Colonic mucosa (tissue), 4 donors: ENCODE measurements at regions of chr6 and their contacts with region 1.

Region 1: GRCh38 chr6:111210194-111210728 is 123.0 kb downstream of the SLC16A10 start:
- DNase-seq: no peak
- H3K4me3 ChIP-seq: no peak overlapping the region
- H3K27ac ChIP-seq: no peak overlapping the region
- H3K4me1 ChIP-seq: no peaks in the 10 kb centered on the region
- H3K27me3 ChIP-seq: no peaks in the 10 kb centered on the region
- CTCF ChIP-seq: peak; percentile 57

Region 2: GRCh38 chr6:111011360-111012142 is 198.7 kb before region 1 on chr6:
- intact Hi-C with region 1: loop called (anchors 2 kb)
- DNase-seq: no peak
- H3K4me3 ChIP-seq: no peak overlapping the region
- H3K27ac ChIP-seq: no peak overlapping the region
- H3K4me1 ChIP-seq: no peaks in the 10 kb centered on the region
- H3K27me3 ChIP-seq: no peaks in the 10 kb centered on the region
- CTCF ChIP-seq: peak; percentile 32

Region 3: GRCh38 chr6:111057074-111057752 is 153.0 kb before region 1 on chr6:
- intact Hi-C with region 1: loop called (anchors 2 kb)
- DNase-seq: no peak
- H3K4me3 ChIP-seq: no peak overlapping the region
- H3K27ac ChIP-seq: no peak overlapping the region
- H3K4me1 ChIP-seq: no peaks in the 10 kb centered on the region
- H3K27me3 ChIP-seq: no peaks in the 10 kb centered on the region
- CTCF ChIP-seq: peak; percentile 58

Region 4: DNA sequence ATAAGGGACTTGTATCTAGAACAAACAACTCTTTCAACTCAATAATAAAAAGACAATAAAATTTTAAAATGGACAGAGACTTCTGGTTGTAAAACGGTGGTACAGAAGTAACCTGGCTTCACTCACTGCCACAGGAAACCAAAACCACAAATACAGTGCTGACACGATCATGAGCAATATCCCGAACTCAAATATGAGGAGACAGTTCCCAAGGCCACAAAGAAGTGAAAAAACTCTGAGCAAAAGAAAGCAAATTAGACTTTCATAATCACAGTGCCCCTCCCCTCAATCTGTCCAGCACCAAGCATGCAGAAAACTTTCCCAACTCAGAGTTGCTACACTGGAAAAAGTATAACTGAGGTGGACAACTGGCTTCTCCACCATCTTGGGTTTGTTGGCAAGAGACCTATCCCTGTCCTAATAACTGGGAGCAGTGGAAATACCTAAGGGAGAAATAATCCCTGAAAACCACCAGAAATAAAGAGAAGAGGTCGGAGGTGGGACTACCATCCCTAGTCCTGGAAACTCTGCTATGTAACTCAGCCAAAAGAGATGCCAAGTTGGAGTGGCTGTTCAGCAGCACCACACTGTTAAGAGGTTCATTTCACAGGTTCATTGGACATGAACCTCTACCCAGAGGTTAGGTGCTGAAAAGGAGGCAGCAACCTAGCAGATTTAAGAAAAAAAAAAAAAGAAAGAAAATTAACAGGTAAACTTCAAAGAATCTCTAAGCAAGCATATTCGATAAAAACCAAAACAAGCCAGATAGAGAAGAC is 217.3 kb after region 1 on chr6:
- intact Hi-C with region 1: no loop called
- DNase-seq: no peak
- H3K4me3 ChIP-seq: no peak overlapping the region
- H3K27ac ChIP-seq: peak overlapping the region; percentile 34
- H3K4me1 ChIP-seq: peaks cover 6% of the 10 kb centered on the region
- H3K27me3 ChIP-seq: no peaks in the 10 kb centered on the region
- CTCF ChIP-seq: no peak

Region 5: GRCh38 chr6:112010328-112010727 is 800.1 kb after region 1 on chr6:
- intact Hi-C with region 1: no loop called
- DNase-seq: no peak
- H3K4me3 ChIP-seq: no peak overlapping the region
- H3K27ac ChIP-seq: no peak overlapping the region
- H3K4me1 ChIP-seq: no peaks in the 10 kb centered on the region
- H3K27me3 ChIP-seq: no peaks in the 10 kb centered on the region
- CTCF ChIP-seq: no peak